CD8-positive, alpha-beta memory T cell (primary cell): ENCODE measurements at regions of chr21 and their contacts with region 1.

Region 1: DNA sequence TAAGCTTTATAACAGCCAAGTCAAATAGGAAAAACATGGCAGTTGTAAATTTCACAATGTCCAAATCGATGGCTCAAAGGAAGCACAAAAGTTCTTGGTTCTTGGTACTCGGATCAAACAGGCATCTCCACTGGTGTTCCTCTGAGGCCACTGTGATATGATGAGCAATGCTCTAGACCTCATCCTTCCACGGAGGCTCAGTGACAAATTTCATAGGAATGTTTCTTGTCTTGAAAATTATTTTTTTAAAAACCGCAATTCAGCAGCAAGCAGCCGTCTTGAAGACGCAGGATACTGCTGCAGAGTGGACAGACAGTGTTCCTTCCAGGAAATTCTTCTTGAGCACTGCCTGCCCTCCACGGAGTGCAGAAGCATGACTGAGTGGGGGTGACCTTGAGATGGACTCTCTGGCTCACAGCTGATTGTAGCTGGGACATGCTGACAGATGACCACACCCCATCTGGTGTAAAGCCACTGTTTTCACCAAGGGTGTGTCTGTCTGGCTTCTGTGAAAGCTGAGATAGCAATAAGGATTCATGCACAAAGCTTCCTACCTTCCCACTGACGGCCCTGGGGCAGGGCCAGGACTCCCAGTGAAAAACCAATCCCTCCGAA is 61.9 kb downstream of the TIAM1 start:
- DNase-seq: no peak
- H3K4me3 ChIP-seq: no peak overlapping the region
- H3K4me3 Mint-ChIP-seq: peak overlapping the region in 1 of 7 donors; percentile 8
- H3K27ac ChIP-seq: no peak overlapping the region
- H3K27ac Mint-ChIP-seq: peak overlapping the region in 3 of 8 donors; percentile 19 to 30 (median 22)
- H3K4me1 ChIP-seq: peaks cover 19% of the 10 kb centered on the region
- H3K4me1 Mint-ChIP-seq: peaks cover 14 to 31% (median 19%) of the 10 kb centered on the region in 3 donors
- H3K27me3 ChIP-seq: no peaks in the 10 kb centered on the region
- H3K27me3 Mint-ChIP-seq: no peaks in the 10 kb centered on the region

Region 2: DNA sequence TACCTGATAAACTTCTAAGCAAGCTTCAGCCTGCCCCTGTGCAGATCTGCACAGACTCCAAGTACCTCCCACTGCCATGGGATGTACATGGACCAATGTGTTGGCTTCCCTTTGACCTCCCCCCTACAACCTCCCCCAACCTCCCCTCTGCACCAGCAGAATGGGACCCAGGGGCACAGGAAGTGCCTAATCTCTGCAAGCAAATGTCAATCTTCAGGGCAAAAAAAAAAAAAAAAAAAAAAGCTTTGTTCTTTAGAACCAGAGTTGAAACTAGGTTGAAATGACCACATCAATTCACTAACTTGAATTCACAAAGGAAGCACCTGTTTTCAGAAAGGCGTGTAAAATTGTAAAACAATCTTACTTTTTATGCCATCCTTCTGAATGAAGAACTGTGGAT is 115.7 kb after region 1 on chr21:
- CTCF ChIA-PET with region 1: no interaction called
- POLR2A ChIA-PET with region 1: interaction called, 16 read pairs
- DNase-seq: peak in 2 of 5 donors; percentile 25 to 64
- H3K4me3 ChIP-seq: no peak overlapping the region
- H3K4me3 Mint-ChIP-seq: peak overlapping the region in 5 of 7 donors; percentile 30 to 57 (median 41)
- H3K27ac ChIP-seq: no peak overlapping the region
- H3K27ac Mint-ChIP-seq: peak overlapping the region in 3 of 8 donors; percentile 17 to 67 (median 52)
- H3K4me1 ChIP-seq: peaks cover 41% of the 10 kb centered on the region
- H3K4me1 Mint-ChIP-seq: peaks cover 24 to 31% (median 29%) of the 10 kb centered on the region in 3 donors
- H3K27me3 ChIP-seq: no peaks in the 10 kb centered on the region
- H3K27me3 Mint-ChIP-seq: no peaks in the 10 kb centered on the region